ENCODE measurements at regions of chr17 and their contacts with region 1.

Region 1: GRCh38 chr17:62653002-62653825 is 25.7 kb downstream of the MRC2 start:
- DNase-seq: peak; percentile 91
- H3K4me3 Mint-ChIP-seq: peak overlapping the region; percentile 84
- H3K27ac Mint-ChIP-seq: peak overlapping the region; percentile 27
- H3K4me1 Mint-ChIP-seq: peaks cover 20% of the 10 kb centered on the region
- H3K27me3 Mint-ChIP-seq: peaks cover 72% of the 10 kb centered on the region

Region 2: GRCh38 chr17:62627911-62628633 is 25.1 kb before region 1 on chr17:
- intact Hi-C with region 1: loop called (anchors 1 kb)
- DNase-seq: peak; percentile 71
- H3K4me3 Mint-ChIP-seq: peak overlapping the region; percentile 89
- H3K27ac Mint-ChIP-seq: peak overlapping the region; percentile 77
- H3K4me1 Mint-ChIP-seq: peaks cover 9% of the 10 kb centered on the region
- H3K27me3 Mint-ChIP-seq: peaks cover 46% of the 10 kb centered on the region

Region 3: GRCh38 chr17:62724398-62725146 is 71.4 kb after region 1 on chr17:
- intact Hi-C with region 1: loop called (anchors 1 kb)
- DNase-seq: peak; percentile 86
- H3K4me3 Mint-ChIP-seq: peak overlapping the region; percentile 45
- H3K27ac Mint-ChIP-seq: peak overlapping the region; percentile 52
- H3K4me1 Mint-ChIP-seq: peaks cover 13% of the 10 kb centered on the region
- H3K27me3 Mint-ChIP-seq: peaks cover 78% of the 10 kb centered on the region